Calu3 (cell line): ENCODE measurements at regions of chr10 and their contacts with region 1.

Region 1: DNA sequence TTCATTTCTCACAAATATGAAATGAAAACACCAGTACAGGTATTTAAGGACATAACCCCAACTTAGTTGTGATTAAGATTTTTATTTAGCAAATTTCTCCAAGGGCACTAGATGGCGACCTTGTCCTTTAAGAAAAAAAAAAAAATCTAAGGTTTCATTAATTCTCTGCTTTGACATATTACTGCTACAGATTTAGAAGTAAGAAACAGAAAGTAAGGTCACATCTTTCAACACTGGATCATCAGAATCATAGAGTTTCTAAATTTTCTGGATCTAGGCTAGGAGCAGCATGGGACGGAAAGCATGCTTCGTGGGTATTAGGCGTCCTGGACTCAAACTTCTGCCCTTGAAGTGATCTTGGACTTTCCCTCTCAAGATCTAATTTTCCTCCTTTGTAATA is 85.5 kb upstream of the PRKG1 start:
- DNase-seq: no peak
- H3K4me3 Mint-ChIP-seq: no peak overlapping the region
- H3K27ac Mint-ChIP-seq: no peak overlapping the region
- H3K4me1 Mint-ChIP-seq: peaks cover 24% of the 10 kb centered on the region
- H3K27me3 Mint-ChIP-seq: peaks cover 27% of the 10 kb centered on the region
- CTCF ChIP-seq: no peak

Region 2: GRCh38 chr10:50794490-50794889 is 194.3 kb before region 1 on chr10:
- CTCF ChIA-PET with region 1: no interaction called
- intact Hi-C with region 1: loop called (anchors 10 kb)
- DNase-seq: no peak
- H3K4me3 Mint-ChIP-seq: no peak overlapping the region
- H3K27ac Mint-ChIP-seq: no peak overlapping the region
- H3K4me1 Mint-ChIP-seq: peaks cover 5% of the 10 kb centered on the region
- H3K27me3 Mint-ChIP-seq: no peaks in the 10 kb centered on the region
- CTCF ChIP-seq: no peak

Region 3: DNA sequence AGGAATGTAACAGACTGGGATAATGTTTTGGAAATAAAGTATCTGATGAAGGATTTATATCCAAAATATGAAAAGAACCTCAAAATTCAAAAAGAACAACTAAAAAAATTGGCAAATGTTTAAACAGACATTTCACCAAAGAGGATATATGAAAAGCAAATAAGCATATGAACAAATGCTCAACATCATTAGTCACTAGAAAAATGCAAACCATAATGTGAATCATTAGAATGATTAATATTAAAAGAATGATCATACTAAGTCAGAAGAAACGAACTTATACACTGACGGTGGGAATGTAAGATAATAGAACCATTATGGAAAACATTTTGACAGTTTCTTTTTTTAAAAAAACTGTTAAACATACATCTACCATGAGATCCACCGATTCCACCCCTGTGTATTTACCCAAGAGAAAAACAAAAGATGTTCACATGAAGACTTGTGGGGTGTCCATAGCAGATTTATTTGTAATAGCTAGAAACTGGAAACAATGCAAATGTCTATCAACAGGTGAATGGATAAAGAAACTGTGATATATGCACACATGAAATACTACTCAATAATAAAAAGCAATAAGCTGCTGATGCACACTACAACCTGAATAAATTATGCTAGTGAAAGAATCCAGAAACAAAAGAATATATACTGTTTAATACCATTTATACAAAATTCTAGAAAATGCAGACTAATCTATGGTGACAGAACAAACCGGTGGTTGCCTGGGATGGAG is 121.2 kb after region 1 on chr10:
- CTCF ChIA-PET with region 1: no interaction called
- intact Hi-C with region 1: no loop called
- DNase-seq: no peak
- H3K4me3 Mint-ChIP-seq: no peak overlapping the region
- H3K27ac Mint-ChIP-seq: no peak overlapping the region
- H3K4me1 Mint-ChIP-seq: peaks cover 18% of the 10 kb centered on the region
- H3K27me3 Mint-ChIP-seq: no peaks in the 10 kb centered on the region
- CTCF ChIP-seq: no peak